ENCODE measurements at regions of chr7 and their contacts with region 1.

Region 1: GRCh38 chr7:23482686-23483085 is 12.4 kb upstream of the IGF2BP3 start:
- DNase-seq: no peak

Region 2: GRCh38 chr7:22962775-22963358 is 519.8 kb before region 1 on chr7:
- CTCF ChIA-PET with region 1: no interaction called
- POLR2A ChIA-PET with region 1: no interaction called
- DNase-seq: no peak

Region 3: GRCh38 chr7:23533160-23533559 is 50.5 kb after region 1 on chr7:
- CTCF ChIA-PET with region 1: interaction called, 11 read pairs
- POLR2A ChIA-PET with region 1: interaction called, 3 read pairs
- DNase-seq: no peak

Measured in HEK293T (cell line).